Upper lobe of right lung (tissue), 1 donor: ENCODE measurements at regions of chr3 and their contacts with region 1.

Region 1: GRCh38 chr3:58414538-58415197 is 19.0 kb downstream of the PDHB start:
- DNase-seq: no peak
- ATAC-seq: peak; percentile 78
- H3K4me3 ChIP-seq: no peak overlapping the region
- H3K27ac ChIP-seq: no peak overlapping the region
- H3K4me1 ChIP-seq: no peaks in the 10 kb centered on the region
- H3K27me3 ChIP-seq: no peaks in the 10 kb centered on the region
- CTCF ChIP-seq: peak; percentile 81

Region 2: GRCh38 chr3:58317811-58318210 is 96.9 kb before region 1 on chr3:
- intact Hi-C with region 1: loop called (anchors 10 kb)
- DNase-seq: no peak
- ATAC-seq: no peak
- H3K4me3 ChIP-seq: no peak overlapping the region
- H3K27ac ChIP-seq: no peak overlapping the region
- H3K4me1 ChIP-seq: no peaks in the 10 kb centered on the region
- H3K27me3 ChIP-seq: no peaks in the 10 kb centered on the region
- CTCF ChIP-seq: no peak

Region 3: GRCh38 chr3:58704745-58705144 is 290.1 kb after region 1 on chr3:
- intact Hi-C with region 1: no loop called
- DNase-seq: no peak
- ATAC-seq: no peak
- H3K4me3 ChIP-seq: no peak overlapping the region
- H3K27ac ChIP-seq: no peak overlapping the region
- H3K4me1 ChIP-seq: peaks cover 4% of the 10 kb centered on the region
- H3K27me3 ChIP-seq: no peaks in the 10 kb centered on the region
- CTCF ChIP-seq: no peak